ENCODE measurements at regions of chr17 and their contacts with region 1.

Region 1: GRCh38 chr17:32828822-32829221 is 48.1 kb downstream of the MYO1D start:
- DNase-seq: no peak
- ATAC-seq: peak in 2 of 4 donors; percentile 13 to 35
- H3K4me3 ChIP-seq: peak overlapping the region in 2 of 12 donors; percentile 39 to 47
- H3K27ac ChIP-seq: peak overlapping the region in 6 of 12 donors; percentile 1 to 66 (median 42)
- H3K4me1 ChIP-seq: peaks cover 0 to 31% (median 9%) of the 10 kb centered on the region in 12 donors
- H3K27me3 ChIP-seq: no peaks in the 10 kb centered on the region
- CTCF ChIP-seq: no peak
- POLR2A ChIP-seq: no peak

Region 2: DNA sequence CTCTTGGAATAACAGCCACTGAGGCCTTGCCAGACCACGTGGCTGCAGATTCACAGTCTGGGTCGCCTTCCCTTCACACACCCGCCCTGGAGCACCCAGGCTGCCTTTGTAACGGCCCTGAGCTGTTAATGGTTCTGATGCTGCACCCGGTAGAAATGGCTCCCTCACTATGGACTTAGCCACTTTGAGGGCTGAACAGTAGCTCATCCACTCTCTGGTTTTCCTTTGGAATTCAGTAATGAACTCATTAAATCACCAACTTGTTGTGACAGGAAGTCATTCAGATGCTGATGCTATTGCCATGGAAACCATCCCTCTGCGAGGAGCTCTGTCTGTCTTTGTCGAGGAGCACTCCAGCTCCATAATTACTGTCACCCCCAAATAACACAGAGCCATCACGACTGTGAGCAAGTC is 282.8 kb before region 1 on chr17:
- intact Hi-C with region 1: no loop called
- DNase-seq: no peak
- ATAC-seq: no peak
- H3K4me3 ChIP-seq: no peak overlapping the region
- H3K27ac ChIP-seq: no peak overlapping the region
- H3K4me1 ChIP-seq: no peaks in the 10 kb centered on the region
- H3K27me3 ChIP-seq: no peaks in the 10 kb centered on the region
- CTCF ChIP-seq: no peak
- POLR2A ChIP-seq: no peak

Region 3: GRCh38 chr17:32840241-32840640 is 11.4 kb after region 1 on chr17:
- intact Hi-C with region 1: loop called in 1 of 10 experiments (anchors 2 kb)
- DNase-seq: no peak
- ATAC-seq: no peak
- H3K4me3 ChIP-seq: no peak overlapping the region
- H3K27ac ChIP-seq: no peak overlapping the region
- H3K4me1 ChIP-seq: peaks cover 0 to 12% (median 0%) of the 10 kb centered on the region in 12 donors
- H3K27me3 ChIP-seq: no peaks in the 10 kb centered on the region
- CTCF ChIP-seq: no peak
- POLR2A ChIP-seq: no peak

Region 4: DNA sequence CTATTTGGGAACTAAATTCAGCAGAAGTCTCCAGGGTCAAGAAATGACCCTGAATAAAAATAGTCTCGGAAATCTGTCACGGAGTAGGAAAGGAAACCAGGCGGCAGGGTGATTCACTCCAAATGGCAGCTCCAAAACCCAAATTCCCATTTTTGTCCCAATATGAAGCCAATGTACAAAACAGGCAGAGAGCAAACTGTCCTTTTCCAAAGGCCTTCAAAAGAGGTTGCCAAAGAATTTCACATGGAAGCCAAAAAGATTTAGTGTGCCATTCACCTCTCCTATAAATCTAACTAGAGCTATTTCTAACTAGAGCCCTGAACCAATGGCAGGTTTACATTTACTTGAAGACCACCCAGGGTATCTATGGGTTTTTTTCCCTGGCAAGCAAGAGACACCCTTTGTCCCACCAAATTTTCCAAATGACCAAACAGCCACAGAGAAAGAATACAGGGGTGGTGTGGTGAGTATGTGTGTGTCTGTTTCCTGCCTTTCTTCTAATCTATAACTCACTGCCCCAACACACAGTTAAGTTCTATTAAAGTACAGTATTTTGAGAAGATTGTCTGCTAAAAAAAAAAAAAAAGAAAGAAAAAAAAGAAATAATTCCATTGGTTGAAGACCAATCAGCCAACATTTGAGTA is 41.3 kb after region 1 on chr17:
- intact Hi-C with region 1: loop called in 6 of 10 experiments (anchors 5 to 10 kb)
- DNase-seq: peak in 3 of 5 donors; percentile 23 to 39 (median 34)
- ATAC-seq: peak; percentile 59 to 77 (median 72)
- H3K4me3 ChIP-seq: no peak overlapping the region
- H3K27ac ChIP-seq: peak overlapping the region; percentile 10 to 79 (median 53)
- H3K4me1 ChIP-seq: peaks cover 0 to 58% (median 27%) of the 10 kb centered on the region in 12 donors
- H3K27me3 ChIP-seq: no peaks in the 10 kb centered on the region
- CTCF ChIP-seq: no peak
- POLR2A ChIP-seq: no peak

Region 5: DNA sequence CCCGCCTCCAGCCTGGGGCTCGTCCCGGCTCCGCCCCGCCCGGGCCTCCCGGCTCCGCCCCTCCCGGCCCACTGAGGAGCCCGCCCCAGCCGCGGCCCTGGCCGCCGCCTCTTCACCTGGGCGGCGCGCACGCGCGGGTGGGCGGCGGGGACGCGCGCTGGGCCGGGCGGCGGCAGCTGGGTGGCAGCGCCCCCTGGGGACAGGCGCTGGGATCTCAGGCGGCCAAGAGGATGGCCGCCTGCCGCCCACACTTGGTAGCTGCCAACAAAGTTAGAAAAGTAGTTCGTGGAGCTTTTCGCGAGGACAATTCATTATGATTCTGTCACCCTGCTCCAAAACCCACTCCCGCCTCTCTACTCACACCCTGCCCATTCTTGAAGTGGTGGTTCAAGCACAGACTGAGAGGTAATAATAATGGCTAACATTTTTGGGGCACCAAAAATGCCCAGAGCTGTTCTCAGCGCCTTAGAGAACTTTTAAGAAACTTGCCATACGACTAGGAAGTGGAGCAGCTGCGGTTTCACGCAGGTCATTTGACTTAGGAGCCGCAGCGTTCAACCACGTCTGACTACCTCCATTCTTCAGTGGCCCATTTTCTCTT is 48.4 kb after region 1 on chr17:
- intact Hi-C with region 1: loop called in 5 of 10 experiments (anchors 5 to 10 kb)
- DNase-seq: peak; percentile 90 to 96 (median 93)
- ATAC-seq: peak; percentile 96 to 100 (median 100)
- H3K4me3 ChIP-seq: peak overlapping the region in 11 of 12 donors; percentile 71 to 93 (median 80)
- H3K27ac ChIP-seq: peak overlapping the region in 11 of 12 donors; percentile 61 to 90 (median 81)
- H3K4me1 ChIP-seq: peaks cover 0 to 27% (median 9%) of the 10 kb centered on the region in 12 donors
- H3K27me3 ChIP-seq: peaks cover 0 to 5% (median 0%) of the 10 kb centered on the region in 9 donors
- CTCF ChIP-seq: peak; percentile 64 to 96 (median 85)
- POLR2A ChIP-seq: no peak